Sigmoid colon (tissue), 7 donors: ENCODE measurements at regions of chrX and their contacts with region 1.

Region 1: DNA sequence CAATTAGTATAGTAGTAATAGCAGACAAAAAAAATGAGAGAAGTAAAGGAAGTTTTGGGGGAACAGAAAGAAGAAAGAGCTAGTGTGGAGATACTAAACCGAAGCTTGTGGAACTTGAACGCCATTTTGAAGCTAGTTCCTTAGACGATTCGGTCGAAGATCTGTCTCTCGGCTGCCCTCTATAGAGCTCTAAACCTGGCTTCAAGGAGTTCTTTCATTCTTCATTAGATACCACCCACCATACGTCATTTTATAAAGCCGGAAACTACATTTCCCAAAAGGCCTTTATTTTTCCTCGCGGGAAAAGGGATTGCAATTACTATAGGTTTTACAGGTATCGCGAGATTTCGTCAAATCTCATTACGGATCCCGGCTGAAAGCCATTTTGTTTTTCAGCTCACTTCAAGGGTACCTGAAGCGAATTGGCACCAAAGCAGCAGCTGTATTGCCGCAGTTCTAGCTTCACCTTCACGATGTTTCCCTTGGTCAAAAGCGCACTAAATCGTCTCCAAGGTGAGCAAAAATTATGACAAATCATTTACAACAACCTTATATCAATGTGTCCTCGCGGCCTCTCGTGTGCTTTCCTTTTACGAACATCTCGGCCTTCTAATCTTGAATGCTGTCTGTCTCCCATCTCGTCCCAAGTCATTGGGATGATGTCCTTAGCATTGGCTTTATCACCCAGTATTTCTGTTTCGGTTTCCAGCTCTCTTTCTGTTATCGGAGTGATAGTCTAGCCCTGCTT is at the start of gene COX7B:
- DNase-seq: peak; percentile 86
- H3K4me3 ChIP-seq: peak within 1 kb of the TSS; percentile 46 to 61 (median 53)
- H3K27ac ChIP-seq: peak within 1 kb of the TSS; percentile 78 to 90 (median 88)
- H3K4me1 ChIP-seq: peaks cover 0 to 17% (median 1%) of the 10 kb centered on the region in 4 donors
- H3K27me3 ChIP-seq: no peaks in the 10 kb centered on the region
- CTCF ChIP-seq: peak in 1 of 4 experiments; percentile 29
- EP300 ChIP-seq: no peak
- POLR2A ChIP-seq: peak; percentile 55 to 67
- total RNA-seq, gene COX7B: 503 to 1,011 (median 854) TPM

Region 2: DNA sequence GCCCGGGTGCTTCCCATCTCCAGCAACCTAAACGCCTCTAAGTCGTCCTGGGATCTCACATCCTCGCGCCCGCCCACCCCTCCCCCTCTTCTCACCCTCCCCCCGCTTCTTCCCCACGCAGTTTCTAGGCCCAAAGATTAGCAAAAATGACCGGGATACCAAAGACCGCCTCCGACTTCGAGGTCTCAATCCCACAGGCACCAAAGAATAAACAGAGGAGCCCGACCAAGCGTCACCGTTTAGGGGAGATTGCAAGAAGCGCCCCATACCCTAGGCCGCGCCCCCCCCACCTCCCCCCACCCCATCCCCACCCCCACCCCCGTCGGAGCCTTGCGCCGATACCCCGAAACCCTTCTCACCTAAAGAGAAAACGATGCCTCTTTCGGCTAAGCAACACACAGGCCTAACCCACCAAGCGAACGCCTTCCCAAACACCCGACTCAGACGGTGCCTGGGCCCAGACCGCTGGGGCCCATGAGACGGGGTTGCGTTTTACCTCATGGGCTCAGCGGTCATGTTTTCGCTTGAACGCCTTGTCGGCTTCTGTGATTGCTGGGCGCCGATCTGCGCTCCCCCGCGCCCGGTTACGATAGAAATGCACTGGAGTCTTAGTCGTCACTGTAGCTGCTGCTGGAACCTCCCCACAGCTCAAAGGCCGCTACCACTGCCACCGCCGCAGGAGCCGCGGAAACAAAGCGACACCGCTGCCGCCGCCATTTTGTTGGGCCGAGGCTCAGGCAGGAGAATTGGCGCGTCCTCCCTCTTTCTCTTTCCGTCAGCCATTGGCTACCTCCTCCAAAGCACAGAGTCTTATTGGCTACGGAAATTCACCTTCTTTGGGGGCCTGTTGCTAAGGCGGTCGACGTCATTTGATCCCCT is 113.5 kb before region 1 on chrX and contains the start of gene ATRX:
- intact Hi-C with region 1: loop called (anchors 10 kb)
- DNase-seq: peak; percentile 84
- H3K4me3 ChIP-seq: peak within 1 kb of the TSS; percentile 61 to 68 (median 62)
- H3K27ac ChIP-seq: peak within 1 kb of the TSS; percentile 84 to 92 (median 90)
- H3K4me1 ChIP-seq: peaks cover 0 to 8% (median 3%) of the 10 kb centered on the region in 4 donors
- H3K27me3 ChIP-seq: no peaks in the 10 kb centered on the region
- CTCF ChIP-seq: no peak
- EP300 ChIP-seq: no peak
- POLR2A ChIP-seq: peak in 1 of 2 donors; percentile 11
- total RNA-seq, gene ATRX: 102 to 142 (median 140) TPM

Region 3: GRCh38 chrX:78181307-78181706 is 282.1 kb after region 1 on chrX:
- intact Hi-C with region 1: no loop called
- DNase-seq: no peak
- H3K4me3 ChIP-seq: no peak overlapping the region
- H3K27ac ChIP-seq: no peak overlapping the region
- H3K4me1 ChIP-seq: no peaks in the 10 kb centered on the region
- H3K27me3 ChIP-seq: no peaks in the 10 kb centered on the region
- CTCF ChIP-seq: no peak
- EP300 ChIP-seq: no peak
- POLR2A ChIP-seq: no peak